ENCODE measurements at regions of chr4 and their contacts with region 1.

Region 1: DNA sequence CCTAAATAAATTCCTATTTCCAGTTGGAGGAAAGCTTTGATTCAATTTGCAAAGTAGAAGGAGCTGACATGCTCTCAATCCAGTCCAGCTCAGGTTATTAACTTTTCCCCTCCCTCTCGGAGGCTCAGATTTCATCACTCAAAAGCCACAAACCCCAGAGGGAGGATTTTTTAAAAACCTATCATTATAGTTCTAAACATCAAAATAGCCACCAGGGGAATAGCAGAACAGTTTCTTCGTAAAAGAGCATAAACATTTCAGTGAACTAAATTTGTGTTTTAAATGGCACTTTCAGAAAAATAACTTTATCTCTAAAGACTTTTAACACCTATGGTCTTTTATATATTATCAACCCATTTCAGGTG is 8.8 kb downstream of the GPRIN3 start:
- DNase-seq: peak; percentile 33 to 79 (median 77)
- H3K4me3 ChIP-seq: peak overlapping the region in 6 of 7 experiments; percentile 43 to 82 (median 60)
- H3K27ac ChIP-seq: no peak overlapping the region
- H3K4me1 ChIP-seq: peaks cover 41 to 89% (median 60%) of the 10 kb centered on the region in 4 experiments
- H3K27me3 ChIP-seq: no peaks in the 10 kb centered on the region

Region 2: DNA sequence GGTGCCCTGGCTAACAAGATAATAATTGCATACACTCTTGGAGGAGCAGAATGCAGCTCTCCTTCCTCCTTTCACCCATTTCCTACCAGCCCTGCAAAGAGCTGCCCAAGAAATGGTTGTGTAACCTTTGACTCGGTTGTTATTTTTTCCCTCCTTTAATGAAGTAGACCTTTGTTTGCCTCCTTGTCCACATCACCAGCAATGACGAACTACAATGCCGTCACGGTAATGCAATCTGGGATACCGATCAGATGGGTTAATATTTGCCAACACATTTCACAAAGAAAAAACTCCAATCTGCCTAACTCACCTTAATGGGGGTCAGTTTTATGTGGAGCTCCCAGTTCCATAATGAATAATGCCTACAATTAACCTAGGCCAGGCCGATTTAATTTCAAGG is 23.2 kb before region 1 on chr4:
- CTCF ChIA-PET with region 1: interaction called, 10 read pairs
- POLR2A ChIA-PET with region 1: no interaction called
- DNase-seq: no peak
- H3K4me3 ChIP-seq: no peak overlapping the region
- H3K27ac ChIP-seq: no peak overlapping the region
- H3K4me1 ChIP-seq: peaks cover 0 to 6% (median 2%) of the 10 kb centered on the region in 4 experiments
- H3K27me3 ChIP-seq: no peaks in the 10 kb centered on the region

Measured in common myeloid progenitor, CD34-positive (primary cell).